Activated CD4-positive, alpha-beta T cell treated with anti-CD3 and anti-CD28 coated beads, Interleukin-2, amount 10 ng/mL, durations not matched to agents 7 days and 5 days (primary cell): ENCODE measurements at regions of chr7 and their contacts with region 1.

Region 1: GRCh38 chr7:138886501-138886917 is 88.5 kb upstream of the ATP6V0A4 start:
- DNase-seq: peak; percentile 79
- H3K4me3 Mint-ChIP-seq: no peak overlapping the region
- H3K27ac Mint-ChIP-seq: peak overlapping the region; percentile 75
- H3K4me1 Mint-ChIP-seq: peaks cover 35% of the 10 kb centered on the region
- H3K27me3 Mint-ChIP-seq: no peaks in the 10 kb centered on the region

Region 2: DNA sequence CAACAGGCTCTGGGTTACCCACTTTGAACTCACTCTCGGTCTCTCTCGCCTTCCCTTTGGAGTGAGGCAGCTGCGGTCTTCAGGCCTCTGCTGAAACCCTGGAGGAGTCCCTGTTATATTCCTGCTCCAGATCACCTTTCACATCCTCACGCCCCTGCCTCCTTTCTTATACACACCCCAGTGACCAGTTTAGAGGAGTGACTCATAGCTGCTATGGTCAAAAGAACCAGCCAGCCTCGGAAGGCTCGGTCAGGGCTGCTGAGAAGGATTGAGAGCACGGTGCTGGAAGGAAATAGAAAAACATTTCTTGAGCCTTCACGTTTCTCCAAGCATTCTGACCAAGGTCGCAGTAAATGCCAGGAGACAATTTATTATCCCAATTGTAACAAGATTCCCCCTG is 157.1 kb before region 1 on chr7:
- CTCF ChIA-PET with region 1: no interaction called
- POLR2A ChIA-PET with region 1: no interaction called
- DNase-seq: no peak
- H3K4me3 Mint-ChIP-seq: no peak overlapping the region
- H3K27ac Mint-ChIP-seq: no peak overlapping the region
- H3K4me1 Mint-ChIP-seq: peaks cover 3% of the 10 kb centered on the region
- H3K27me3 Mint-ChIP-seq: no peaks in the 10 kb centered on the region

Region 3: GRCh38 chr7:138876326-138876725 is 10.2 kb before region 1 on chr7:
- CTCF ChIA-PET with region 1: interaction called, 23 read pairs
- POLR2A ChIA-PET with region 1: no interaction called
- DNase-seq: no peak
- H3K4me3 Mint-ChIP-seq: no peak overlapping the region
- H3K27ac Mint-ChIP-seq: no peak overlapping the region
- H3K4me1 Mint-ChIP-seq: peaks cover 20% of the 10 kb centered on the region
- H3K27me3 Mint-ChIP-seq: no peaks in the 10 kb centered on the region

Region 4: GRCh38 chr7:138898255-138898654 is 11.7 kb after region 1 on chr7:
- CTCF ChIA-PET with region 1: interaction called, 24 read pairs
- POLR2A ChIA-PET with region 1: no interaction called
- DNase-seq: peak; percentile 36
- H3K4me3 Mint-ChIP-seq: peak overlapping the region; percentile 14
- H3K27ac Mint-ChIP-seq: peak overlapping the region; percentile 83
- H3K4me1 Mint-ChIP-seq: peaks cover 55% of the 10 kb centered on the region
- H3K27me3 Mint-ChIP-seq: peaks cover 42% of the 10 kb centered on the region

Region 5: DNA sequence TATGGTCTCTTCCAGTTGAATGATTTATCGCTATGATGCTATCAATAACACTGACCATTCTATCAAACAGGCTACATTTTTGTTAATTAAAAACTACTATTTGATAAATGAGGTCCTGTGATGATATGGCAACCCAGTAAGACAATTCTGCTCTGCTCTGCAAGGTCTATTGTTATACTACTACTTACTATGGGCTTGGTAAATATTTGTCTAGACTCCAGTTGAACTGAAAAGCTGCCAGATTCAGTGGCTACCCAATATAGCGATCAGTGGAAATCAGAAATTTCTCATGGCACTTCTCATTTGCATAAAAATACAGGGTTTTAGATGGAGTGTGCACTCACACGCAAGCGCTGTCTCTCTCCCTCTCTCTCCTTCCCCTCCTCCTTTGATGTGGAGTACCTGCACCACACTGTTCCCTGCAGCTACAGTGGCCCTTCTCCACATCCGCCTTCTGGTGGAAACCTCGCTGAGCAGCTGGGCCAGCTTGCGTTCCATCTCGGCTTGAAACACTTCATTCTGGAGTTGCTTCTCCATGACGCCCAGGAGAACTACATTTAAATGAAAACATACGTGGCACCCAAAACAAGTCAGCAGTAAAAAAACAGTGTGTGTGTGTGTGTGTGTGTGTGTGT is 16.8 kb after region 1 on chr7:
- CTCF ChIA-PET with region 1: interaction called, 23 read pairs
- POLR2A ChIA-PET with region 1: no interaction called
- DNase-seq: peak; percentile 94
- H3K4me3 Mint-ChIP-seq: peak overlapping the region; percentile 69
- H3K27ac Mint-ChIP-seq: peak overlapping the region; percentile 89
- H3K4me1 Mint-ChIP-seq: peaks cover 56% of the 10 kb centered on the region
- H3K27me3 Mint-ChIP-seq: peaks cover 48% of the 10 kb centered on the region